Activated T-helper 2 cell treated with anti-CD3 and anti-CD28 coated beads, Interferon-gamma antibody, Interleukin-2, Interleukin-4, amounts not matched to agents 10 μg/mL and 5 μg/mL and 100 μg/mL, durations not matched to agents 14 hours and 24 hours and 36 hours (primary cell): ENCODE measurements at regions of chr3 and their contacts with region 1.

Region 1: DNA sequence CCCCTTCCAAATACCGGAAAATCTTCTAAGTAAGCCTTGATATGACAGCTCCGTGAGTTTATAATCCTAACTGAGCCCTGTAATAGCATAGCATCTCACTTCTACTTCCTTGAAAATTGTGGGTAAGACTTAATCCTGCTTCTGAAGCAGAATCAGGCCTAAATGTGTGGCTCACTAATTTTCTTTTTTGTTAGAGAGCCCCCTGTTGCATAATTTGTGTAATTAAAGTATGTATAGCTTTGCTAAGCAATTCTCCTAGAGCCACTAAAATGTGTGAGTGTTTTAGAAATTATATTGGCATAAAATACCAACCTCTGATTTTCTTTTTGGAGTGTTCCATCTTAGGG is 304.4 kb downstream of the FGF12 start:
- DNase-seq: no peak
- H3K4me3 Mint-ChIP-seq: no peak overlapping the region
- H3K27ac Mint-ChIP-seq: no peak overlapping the region
- H3K4me1 Mint-ChIP-seq: no peaks in the 10 kb centered on the region
- H3K27me3 Mint-ChIP-seq: no peaks in the 10 kb centered on the region

Region 2: GRCh38 chr3:192188218-192188835 is 234.6 kb before region 1 on chr3:
- intact Hi-C with region 1: loop called (anchors 1 kb)
- DNase-seq: peak; percentile 10
- H3K4me3 Mint-ChIP-seq: no peak overlapping the region
- H3K27ac Mint-ChIP-seq: no peak overlapping the region
- H3K4me1 Mint-ChIP-seq: no peaks in the 10 kb centered on the region
- H3K27me3 Mint-ChIP-seq: no peaks in the 10 kb centered on the region